Activated T-helper 2 cell treated with anti-CD3 and anti-CD28 coated beads, Interferon-gamma antibody, Interleukin-2, Interleukin-4, amounts not matched to agents 10 μg/mL and 5 μg/mL and 100 μg/mL, durations not matched to agents 14 hours and 24 hours and 36 hours (primary cell): ENCODE measurements at regions of chr15 and their contacts with region 1.

Region 1: DNA sequence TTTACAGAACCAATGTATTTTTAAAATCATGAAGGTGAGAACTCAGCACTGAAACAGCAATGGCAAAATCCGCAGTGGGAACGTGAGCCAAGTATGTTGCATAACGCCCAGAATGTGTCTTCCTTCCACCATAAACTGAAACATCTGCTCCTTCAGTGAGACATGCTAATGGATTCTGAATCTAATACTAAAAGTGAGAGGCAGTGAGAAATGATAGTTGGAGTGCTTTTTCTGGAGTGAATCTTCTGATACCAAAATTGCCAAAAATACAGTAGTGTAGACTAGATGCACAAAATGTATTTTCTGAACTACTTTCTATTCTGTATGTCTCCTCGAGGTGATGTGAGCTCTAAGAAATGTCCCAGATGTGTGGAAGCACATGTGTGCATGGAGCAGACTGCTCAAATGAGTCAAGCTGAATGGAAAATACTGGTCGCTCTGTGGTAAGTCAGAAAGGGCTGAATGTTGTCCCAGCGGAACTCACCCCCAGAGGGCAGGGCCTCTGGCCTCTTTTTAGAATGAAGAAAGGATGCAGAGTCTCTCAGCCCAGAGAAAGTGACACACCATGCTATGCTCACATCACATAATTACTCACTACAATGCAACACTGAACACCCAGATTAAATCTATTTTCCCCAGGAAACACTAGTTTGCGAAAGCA is 73.0 kb downstream of the ATP10A start:
- DNase-seq: peak; percentile 54
- H3K4me3 Mint-ChIP-seq: peak overlapping the region; percentile 45
- H3K27ac Mint-ChIP-seq: peak overlapping the region; percentile 92
- H3K4me1 Mint-ChIP-seq: peaks cover 61% of the 10 kb centered on the region
- H3K27me3 Mint-ChIP-seq: no peaks in the 10 kb centered on the region

Region 2: DNA sequence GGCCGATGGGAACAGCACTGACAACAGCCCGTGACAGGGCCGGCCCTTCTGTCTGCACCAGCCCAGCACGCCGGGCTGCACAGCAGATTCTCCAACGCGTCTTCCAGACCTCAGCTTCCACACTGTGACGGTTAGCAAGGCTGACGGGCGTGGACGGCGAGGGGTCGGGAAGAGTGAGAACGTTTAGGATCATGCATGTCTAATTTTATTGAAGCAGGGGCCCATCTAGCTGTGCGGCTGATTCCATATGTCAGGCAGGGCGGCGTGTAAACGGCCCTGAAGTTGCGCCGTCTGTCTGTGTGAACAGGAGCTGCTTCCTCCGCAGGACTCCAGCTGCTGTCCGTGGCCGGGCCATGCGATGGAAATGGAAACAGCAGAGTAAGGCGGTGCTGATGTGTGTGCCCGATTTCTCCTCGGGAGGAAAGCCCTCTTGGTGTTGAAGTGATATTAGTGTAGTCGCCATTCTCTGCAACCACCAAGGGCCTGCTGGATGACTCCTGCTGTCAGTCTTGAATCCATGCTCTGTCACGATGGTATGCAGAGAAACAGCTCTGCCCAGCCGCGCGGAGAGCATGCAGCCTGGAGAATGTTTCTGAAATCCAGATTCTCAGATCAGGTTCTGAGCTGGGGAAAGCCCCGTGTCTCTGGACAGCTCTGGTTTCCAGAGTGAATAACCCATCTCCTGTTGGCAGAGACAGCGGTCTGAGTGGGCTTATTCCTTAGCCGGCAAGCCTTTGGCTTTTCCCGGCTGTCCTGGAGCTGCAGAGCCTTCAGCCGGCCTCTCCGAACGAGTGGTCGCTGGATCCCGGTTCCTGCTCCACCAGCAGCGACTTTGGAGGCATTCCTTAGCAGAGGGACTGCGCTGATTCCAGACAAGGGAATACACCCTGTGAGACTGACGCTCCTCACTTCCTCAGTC is 193.2 kb before region 1 on chr15:
- intact Hi-C with region 1: no loop called
- DNase-seq: no peak
- H3K4me3 Mint-ChIP-seq: no peak overlapping the region
- H3K27ac Mint-ChIP-seq: no peak overlapping the region
- H3K4me1 Mint-ChIP-seq: no peaks in the 10 kb centered on the region
- H3K27me3 Mint-ChIP-seq: no peaks in the 10 kb centered on the region

Region 3: DNA sequence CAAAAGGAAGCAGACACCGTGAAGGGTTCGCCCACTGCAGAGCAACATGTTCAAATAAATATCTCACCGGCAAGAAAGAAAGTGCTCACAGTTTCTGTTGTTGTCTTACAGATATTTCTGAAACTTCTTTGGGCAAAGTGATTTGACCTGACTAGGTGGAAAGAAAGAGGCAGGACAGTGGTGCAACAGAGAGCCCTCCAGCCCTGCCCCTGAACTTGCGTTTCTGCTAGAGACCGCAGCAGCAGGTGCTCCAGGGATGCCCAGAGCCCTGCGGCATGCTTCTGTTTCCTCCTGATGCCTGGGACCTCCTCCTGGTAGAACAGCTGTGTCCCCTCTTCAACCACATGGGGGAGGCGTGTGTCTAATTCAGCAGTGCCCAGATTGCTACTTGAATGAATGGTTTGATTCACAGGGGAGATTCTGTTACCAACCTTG is 50.4 kb before region 1 on chr15:
- intact Hi-C with region 1: loop called (anchors 5 kb)
- DNase-seq: no peak
- H3K4me3 Mint-ChIP-seq: no peak overlapping the region
- H3K27ac Mint-ChIP-seq: peak overlapping the region; percentile 47
- H3K4me1 Mint-ChIP-seq: peaks cover 16% of the 10 kb centered on the region
- H3K27me3 Mint-ChIP-seq: no peaks in the 10 kb centered on the region

Region 4: GRCh38 chr15:25778161-25778560 is 12.0 kb before region 1 on chr15:
- intact Hi-C with region 1: loop called (anchors 1 kb)
- DNase-seq: no peak
- H3K4me3 Mint-ChIP-seq: no peak overlapping the region
- H3K27ac Mint-ChIP-seq: no peak overlapping the region
- H3K4me1 Mint-ChIP-seq: peaks cover 44% of the 10 kb centered on the region
- H3K27me3 Mint-ChIP-seq: no peaks in the 10 kb centered on the region

Region 5: GRCh38 chr15:25832158-25832557 is 42.0 kb after region 1 on chr15:
- intact Hi-C with region 1: loop called (anchors 1 kb)
- DNase-seq: no peak
- H3K4me3 Mint-ChIP-seq: no peak overlapping the region
- H3K27ac Mint-ChIP-seq: peak overlapping the region; percentile 73
- H3K4me1 Mint-ChIP-seq: peaks cover 20% of the 10 kb centered on the region
- H3K27me3 Mint-ChIP-seq: no peaks in the 10 kb centered on the region

Region 6: GRCh38 chr15:25863111-25863967 is 73.2 kb after region 1 on chr15 and contains the start of gene ATP10A:
- intact Hi-C with region 1: loop called (anchors 1 kb)
- DNase-seq: peak; percentile 64
- H3K4me3 Mint-ChIP-seq: peak within 1 kb of the TSS; percentile 92
- H3K27ac Mint-ChIP-seq: peak within 1 kb of the TSS; percentile 88
- H3K4me1 Mint-ChIP-seq: peaks cover 37% of the 10 kb centered on the region
- H3K27me3 Mint-ChIP-seq: peaks cover 11% of the 10 kb centered on the region
- total RNA-seq, gene ATP10A: 40.1 and 44.4 TPM in 2 replicates

Region 7: DNA sequence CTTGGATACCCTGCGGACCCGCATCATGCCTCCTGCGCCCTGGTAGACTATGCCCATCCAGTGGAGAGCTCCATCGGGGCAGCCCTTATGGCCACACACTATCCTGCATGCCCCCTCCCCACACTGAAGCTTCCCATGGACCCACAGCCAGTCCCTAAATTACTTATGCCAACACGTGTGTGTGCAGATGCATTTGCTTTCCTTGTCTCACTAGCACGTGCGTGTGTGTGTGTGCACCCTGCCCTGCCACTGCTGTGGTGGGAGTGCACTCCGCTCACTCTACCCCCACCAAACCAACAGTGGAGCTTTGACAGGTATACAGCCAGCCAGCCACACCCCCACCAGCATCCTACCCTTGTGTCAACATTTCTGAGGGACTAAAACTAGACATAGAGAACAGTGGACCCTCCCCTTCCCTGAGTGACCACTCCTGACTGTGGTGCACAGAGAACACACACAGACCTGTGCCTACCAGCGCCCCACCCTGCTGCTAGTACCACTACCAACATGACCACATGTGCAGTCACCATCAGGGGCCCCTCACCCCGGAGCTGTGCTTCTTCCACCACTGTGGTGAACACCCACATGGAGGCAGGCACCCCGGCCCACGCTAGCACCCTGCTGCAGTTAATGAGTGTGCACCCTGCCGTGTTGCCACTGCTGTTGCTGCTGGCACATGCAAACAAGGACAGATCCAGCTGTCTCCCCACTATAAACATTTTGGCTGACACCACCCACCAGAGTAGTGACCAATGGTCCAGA is 671.9 kb after region 1 on chr15:
- intact Hi-C with region 1: no loop called
- DNase-seq: no peak
- H3K4me3 Mint-ChIP-seq: no peak overlapping the region
- H3K27ac Mint-ChIP-seq: no peak overlapping the region
- H3K4me1 Mint-ChIP-seq: no peaks in the 10 kb centered on the region
- H3K27me3 Mint-ChIP-seq: no peaks in the 10 kb centered on the region